ENCODE measurements at regions of chr1 and their contacts with region 1.

Region 1: GRCh38 chr1:64043976-64044375 is 159.4 kb upstream of the UBE2U start:
- DNase-seq: no peak
- H3K4me3 ChIP-seq: no peak overlapping the region
- H3K27ac ChIP-seq: no peak overlapping the region
- H3K4me1 ChIP-seq: no peaks in the 10 kb centered on the region
- CTCF ChIP-seq: no peak

Region 2: GRCh38 chr1:64006276-64007051 is 37.5 kb before region 1 on chr1:
- CTCF ChIA-PET with region 1: no interaction called
- POLR2A ChIA-PET with region 1: no interaction called
- intact Hi-C with region 1: loop called (anchors 2 kb)
- DNase-seq: no peak
- H3K4me3 ChIP-seq: no peak overlapping the region
- H3K27ac ChIP-seq: no peak overlapping the region
- H3K4me1 ChIP-seq: no peaks in the 10 kb centered on the region
- CTCF ChIP-seq: no peak

Region 3: GRCh38 chr1:64505232-64505943 is 461.4 kb after region 1 on chr1:
- CTCF ChIA-PET with region 1: no interaction called
- POLR2A ChIA-PET with region 1: no interaction called
- intact Hi-C with region 1: no loop called
- DNase-seq: no peak
- H3K4me3 ChIP-seq: no peak overlapping the region
- H3K27ac ChIP-seq: no peak overlapping the region
- H3K4me1 ChIP-seq: no peaks in the 10 kb centered on the region
- CTCF ChIP-seq: no peak

Measured in OCI-LY7 (cell line).